Caco-2 (cell line): ENCODE measurements at regions of chr12 and their contacts with region 1.

Region 1: DNA sequence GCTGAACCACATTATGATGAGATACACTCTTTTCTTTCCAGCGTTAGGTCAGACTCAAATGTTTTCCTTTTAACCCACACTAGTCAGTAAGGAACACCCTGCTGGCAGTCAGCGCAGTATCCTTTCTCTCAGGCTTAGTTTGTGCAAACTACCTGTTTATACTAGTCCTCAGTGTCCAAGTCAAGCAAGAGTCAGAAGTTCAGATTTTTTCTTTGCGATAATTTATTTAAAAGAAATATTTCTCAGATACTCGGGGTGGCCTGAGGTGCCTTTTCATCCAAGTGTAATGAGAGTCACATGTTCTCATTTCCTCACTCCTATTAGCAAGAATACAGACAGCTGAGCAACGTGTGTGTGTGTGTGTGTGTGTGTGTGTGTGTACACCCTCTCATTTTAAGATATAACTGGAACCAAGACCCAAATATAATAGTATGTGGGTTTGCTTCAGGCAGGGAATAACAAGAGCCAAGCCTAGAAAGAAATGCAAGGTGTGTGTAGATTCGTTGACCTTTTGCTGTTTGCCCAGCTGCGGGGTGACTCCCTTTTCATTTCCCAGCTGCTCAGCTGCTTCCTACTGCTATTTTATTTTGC is 182.7 kb downstream of the KICS2 start:
- DNase-seq: peak; percentile 42 to 52
- H3K4me3 ChIP-seq: no peak overlapping the region
- H3K4me3 Mint-ChIP-seq: peak overlapping the region; percentile 9
- H3K27ac Mint-ChIP-seq: peak overlapping the region; percentile 24
- H3K4me1 ChIP-seq: peaks cover 48% of the 10 kb centered on the region
- H3K4me1 Mint-ChIP-seq: peaks cover 38% of the 10 kb centered on the region
- H3K27me3 ChIP-seq: no peaks in the 10 kb centered on the region
- H3K27me3 Mint-ChIP-seq: no peaks in the 10 kb centered on the region
- CTCF ChIP-seq: no peak

Region 2: DNA sequence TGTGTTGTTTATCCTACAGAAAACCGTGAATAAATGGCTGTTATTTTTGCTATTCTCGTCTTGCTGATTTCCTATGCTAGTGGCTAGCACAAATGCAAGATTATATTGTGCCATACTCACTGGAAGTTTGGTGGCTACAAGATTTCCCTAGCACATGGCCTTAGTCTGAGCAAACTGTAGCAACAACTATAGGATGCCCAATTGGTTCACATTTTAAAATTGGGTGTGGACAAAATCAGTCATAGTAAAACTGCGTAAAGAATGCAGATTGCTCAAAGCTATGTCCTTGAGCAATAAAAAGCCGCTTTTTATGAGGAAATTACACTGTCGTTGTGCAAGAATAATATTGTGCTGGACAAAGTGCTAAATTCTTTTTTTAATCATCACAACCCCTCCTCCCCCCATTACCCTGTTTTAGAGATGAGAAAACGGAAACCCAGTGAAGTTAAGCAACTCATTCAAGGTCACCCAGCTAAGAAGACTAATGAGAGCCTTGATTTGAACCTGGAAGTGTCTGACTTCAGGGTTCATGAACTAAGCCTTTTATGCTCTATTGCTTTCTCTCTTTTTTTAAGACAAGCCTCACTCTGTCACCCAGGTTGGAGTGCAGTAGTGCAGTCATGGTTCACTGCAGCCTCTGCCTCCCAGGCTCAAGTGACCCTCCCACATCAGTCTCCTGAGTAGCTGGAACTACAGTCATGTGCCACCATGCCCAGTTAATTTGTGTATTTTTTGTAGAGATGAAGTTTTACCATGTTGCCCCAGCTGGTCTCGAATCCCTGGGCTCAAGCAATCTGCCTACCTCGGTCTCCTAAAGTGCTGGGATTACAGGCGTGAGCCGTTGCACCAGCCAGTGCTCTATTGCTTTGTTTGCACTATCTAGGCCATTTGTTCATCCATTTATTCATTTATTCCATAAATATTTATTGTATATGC is 121.2 kb before region 1 on chr12:
- CTCF ChIA-PET with region 1: interaction called, 3 read pairs
- POLR2A ChIA-PET with region 1: no interaction called
- intact Hi-C with region 1: loop called (anchors 1 kb)
- DNase-seq: peak; percentile 52 to 69
- H3K4me3 ChIP-seq: no peak overlapping the region
- H3K4me3 Mint-ChIP-seq: peak overlapping the region; percentile 8
- H3K27ac Mint-ChIP-seq: peak overlapping the region; percentile 77
- H3K4me1 ChIP-seq: peaks cover 74% of the 10 kb centered on the region
- H3K4me1 Mint-ChIP-seq: peaks cover 47% of the 10 kb centered on the region
- H3K27me3 ChIP-seq: no peaks in the 10 kb centered on the region
- H3K27me3 Mint-ChIP-seq: no peaks in the 10 kb centered on the region
- CTCF ChIP-seq: no peak

Region 3: DNA sequence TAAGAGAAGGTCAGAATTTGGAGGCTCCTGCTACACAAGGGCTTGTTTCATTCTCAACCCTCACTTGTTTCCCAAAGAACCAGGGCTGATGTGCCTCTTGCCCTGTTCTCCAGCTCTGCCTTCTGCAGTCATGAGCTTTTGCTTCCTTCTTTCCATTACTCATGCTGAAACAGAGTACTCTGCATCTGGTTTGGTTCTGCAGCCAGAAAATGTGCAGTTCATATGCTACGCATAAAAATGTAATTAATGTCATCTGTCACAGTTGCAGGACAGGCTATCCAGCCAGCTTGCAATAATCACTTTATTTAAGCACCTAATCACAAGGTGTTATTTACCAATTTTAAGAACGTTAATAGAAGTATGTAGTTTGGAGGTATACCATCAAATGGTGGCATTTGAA is 44.7 kb before region 1 on chr12:
- CTCF ChIA-PET with region 1: no interaction called
- POLR2A ChIA-PET with region 1: no interaction called
- intact Hi-C with region 1: loop called (anchors 5 kb)
- DNase-seq: no peak
- H3K4me3 ChIP-seq: no peak overlapping the region
- H3K4me3 Mint-ChIP-seq: no peak overlapping the region
- H3K27ac Mint-ChIP-seq: no peak overlapping the region
- H3K4me1 ChIP-seq: peaks cover 16% of the 10 kb centered on the region
- H3K4me1 Mint-ChIP-seq: peaks cover 31% of the 10 kb centered on the region
- H3K27me3 ChIP-seq: no peaks in the 10 kb centered on the region
- H3K27me3 Mint-ChIP-seq: no peaks in the 10 kb centered on the region
- CTCF ChIP-seq: no peak